Ovary (tissue), 10 donors: ENCODE measurements at regions of chr2 and their contacts with region 1.

Region 1: GRCh38 chr2:37832590-37833197 is 92.4 kb upstream of the RMDN2 start:
- DNase-seq: peak; percentile 83 to 92 (median 89)
- H3K4me3 ChIP-seq: no peak overlapping the region
- H3K27ac ChIP-seq: no peak overlapping the region
- H3K4me1 ChIP-seq: peaks cover 11% of the 10 kb centered on the region
- H3K27me3 ChIP-seq: no peaks in the 10 kb centered on the region
- CTCF ChIP-seq: peak; percentile 45 to 85 (median 78)
- EP300 ChIP-seq: no peak
- POLR2A ChIP-seq: peak; percentile 24

Region 2: GRCh38 chr2:37615804-37616676 is 216.7 kb before region 1 on chr2:
- intact Hi-C with region 1: loop called in 1 of 4 experiments (anchors 10 kb)
- DNase-seq: no peak
- H3K4me3 ChIP-seq: no peak overlapping the region
- H3K27ac ChIP-seq: no peak overlapping the region
- H3K4me1 ChIP-seq: peaks cover 16% of the 10 kb centered on the region
- H3K27me3 ChIP-seq: no peaks in the 10 kb centered on the region
- CTCF ChIP-seq: no peak
- EP300 ChIP-seq: no peak
- POLR2A ChIP-seq: no peak

Region 3: DNA sequence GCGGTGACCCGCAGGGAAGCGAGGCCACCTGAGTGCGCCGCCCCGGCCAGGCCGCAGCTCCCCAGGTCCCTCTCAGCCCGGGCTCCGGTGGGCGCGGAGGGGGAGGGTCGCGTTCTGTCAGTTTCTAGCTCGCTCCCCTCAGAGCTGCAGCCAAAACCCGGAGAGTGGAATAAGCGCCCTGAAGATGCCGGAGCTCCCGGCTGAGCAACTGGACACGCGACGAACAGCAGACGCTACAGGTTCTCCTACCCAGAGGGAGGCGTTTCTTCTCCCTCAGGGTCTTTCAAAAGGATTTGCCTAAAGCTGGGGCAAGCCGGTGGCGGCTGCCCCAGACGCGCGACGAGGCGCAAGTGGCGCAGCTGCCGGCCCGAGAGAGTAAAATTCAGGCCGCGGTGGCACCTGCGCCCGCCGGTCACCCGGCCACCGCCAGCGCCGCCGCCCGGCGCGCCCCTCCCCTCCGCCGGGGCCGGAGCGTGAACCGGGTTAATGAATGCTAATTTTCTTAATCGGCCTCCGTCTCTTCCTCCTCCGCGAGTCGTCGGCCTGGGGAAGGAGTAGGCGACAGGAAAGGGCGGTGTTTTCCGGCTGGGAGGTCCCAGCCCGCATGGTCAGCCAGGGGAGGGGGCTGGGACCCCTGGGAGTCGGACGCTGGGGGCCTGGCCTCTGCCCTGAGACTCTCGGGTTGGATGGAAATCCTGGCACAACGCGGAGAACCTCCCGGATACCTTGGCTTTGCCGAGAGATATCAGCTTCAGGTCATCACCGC is 160.4 kb before region 1 on chr2:
- intact Hi-C with region 1: loop called in 1 of 4 experiments (anchors 10 kb)
- DNase-seq: peak; percentile 71 to 83 (median 74)
- H3K4me3 ChIP-seq: peak overlapping the region; percentile 96
- H3K27ac ChIP-seq: peak overlapping the region; percentile 73 to 74
- H3K4me1 ChIP-seq: no peaks in the 10 kb centered on the region
- H3K27me3 ChIP-seq: no peaks in the 10 kb centered on the region
- CTCF ChIP-seq: no peak
- EP300 ChIP-seq: no peak
- POLR2A ChIP-seq: no peak